Activated naive CD4-positive, alpha-beta T cell treated with anti-CD3 and anti-CD28 coated beads for 36 hours (primary cell): ENCODE measurements at regions of chr9 and their contacts with region 1.

Region 1: DNA sequence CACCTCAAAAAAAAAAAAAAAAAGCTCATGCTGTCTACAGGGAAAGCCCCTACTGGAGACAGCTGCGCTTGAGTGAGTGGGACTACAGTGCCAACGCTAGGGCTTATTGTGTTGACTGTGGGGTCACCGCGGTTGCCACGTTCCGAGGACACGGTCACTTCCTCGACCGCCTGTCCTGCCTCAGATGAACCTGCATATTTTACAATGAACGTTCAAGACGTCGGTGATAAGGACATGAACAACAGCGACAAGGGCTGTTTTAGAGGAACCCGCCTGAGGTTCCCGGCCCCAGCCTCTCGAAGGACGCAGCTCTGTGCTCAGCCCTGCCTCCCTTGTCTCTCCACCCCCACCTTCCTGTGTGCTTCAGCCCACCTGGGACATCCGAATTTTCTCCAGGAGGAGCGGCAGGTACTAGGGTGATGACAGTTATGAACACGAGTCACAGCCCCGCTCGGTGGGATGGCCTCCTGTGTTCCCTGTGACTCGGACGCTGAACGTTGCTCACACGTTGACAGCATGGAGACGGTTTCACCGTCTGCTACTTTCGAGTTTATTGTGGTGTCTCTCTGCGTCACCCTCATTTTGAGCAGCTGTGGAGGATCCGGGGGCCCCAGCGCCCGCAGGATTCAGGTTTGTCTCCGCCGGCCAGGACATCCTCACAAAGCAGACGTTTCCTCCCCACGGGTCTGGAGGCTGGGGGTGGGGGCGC is 11.3 kb upstream of the DIPK1B start:
- DNase-seq: peak; percentile 93
- H3K4me3 Mint-ChIP-seq: peak overlapping the region; percentile 69
- H3K27ac Mint-ChIP-seq: peak overlapping the region; percentile 62
- H3K4me1 Mint-ChIP-seq: peaks cover 18% of the 10 kb centered on the region
- H3K27me3 Mint-ChIP-seq: peaks cover 9% of the 10 kb centered on the region

Region 2: DNA sequence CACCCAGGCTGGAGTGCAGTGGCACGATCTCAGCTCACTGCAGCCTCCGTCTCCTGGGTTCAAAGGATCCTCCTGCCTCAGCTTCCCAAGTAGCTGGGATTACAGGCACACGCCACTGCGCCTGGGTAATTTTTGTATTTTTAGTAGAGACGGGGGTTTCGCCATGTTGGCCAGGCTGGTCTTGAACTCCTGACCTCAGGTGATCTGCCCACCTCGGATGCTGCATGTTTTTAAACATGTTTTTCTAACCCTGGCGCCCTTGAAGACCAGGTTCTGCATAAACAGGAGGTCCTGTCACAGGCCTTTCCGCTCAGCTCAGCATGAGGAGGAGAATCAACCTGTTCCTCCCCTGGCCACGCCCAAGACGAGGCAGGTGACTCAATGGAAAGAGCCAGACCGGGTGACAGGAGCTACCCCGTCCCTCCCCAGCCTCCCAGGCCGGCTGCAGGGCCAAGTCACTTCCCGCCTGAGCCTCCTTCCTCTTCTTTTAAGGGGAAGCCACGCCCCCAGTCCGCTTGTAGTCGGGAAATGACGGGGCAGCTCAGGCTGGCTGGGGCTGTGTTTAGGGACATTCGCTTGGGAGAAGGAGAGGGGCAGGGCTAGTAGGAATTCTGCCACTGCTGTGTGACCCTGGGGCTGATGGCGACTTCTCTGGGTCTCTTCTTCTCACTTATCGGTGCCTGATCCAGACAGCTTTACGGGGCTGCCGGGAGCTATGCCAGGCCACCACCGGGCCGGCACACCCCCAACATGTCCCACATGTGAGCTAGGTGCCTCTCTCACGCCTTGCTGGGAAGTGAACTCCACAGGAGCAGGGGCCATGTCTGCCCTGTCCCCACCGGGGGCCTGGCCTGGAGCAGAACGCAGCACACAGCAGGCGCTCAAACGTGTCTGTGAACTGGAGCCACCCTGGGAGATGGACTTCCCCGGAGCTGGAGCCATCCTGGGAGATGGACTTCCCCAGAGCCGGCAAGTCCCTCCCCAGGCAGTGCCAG is 161.4 kb before region 1 on chr9:
- CTCF ChIA-PET with region 1: no interaction called
- intact Hi-C with region 1: loop called (anchors 1 kb)
- DNase-seq: peak; percentile 99
- H3K4me3 Mint-ChIP-seq: peak overlapping the region; percentile 80
- H3K27ac Mint-ChIP-seq: peak overlapping the region; percentile 100
- H3K4me1 Mint-ChIP-seq: peaks cover 70% of the 10 kb centered on the region
- H3K27me3 Mint-ChIP-seq: no peaks in the 10 kb centered on the region

Region 3: DNA sequence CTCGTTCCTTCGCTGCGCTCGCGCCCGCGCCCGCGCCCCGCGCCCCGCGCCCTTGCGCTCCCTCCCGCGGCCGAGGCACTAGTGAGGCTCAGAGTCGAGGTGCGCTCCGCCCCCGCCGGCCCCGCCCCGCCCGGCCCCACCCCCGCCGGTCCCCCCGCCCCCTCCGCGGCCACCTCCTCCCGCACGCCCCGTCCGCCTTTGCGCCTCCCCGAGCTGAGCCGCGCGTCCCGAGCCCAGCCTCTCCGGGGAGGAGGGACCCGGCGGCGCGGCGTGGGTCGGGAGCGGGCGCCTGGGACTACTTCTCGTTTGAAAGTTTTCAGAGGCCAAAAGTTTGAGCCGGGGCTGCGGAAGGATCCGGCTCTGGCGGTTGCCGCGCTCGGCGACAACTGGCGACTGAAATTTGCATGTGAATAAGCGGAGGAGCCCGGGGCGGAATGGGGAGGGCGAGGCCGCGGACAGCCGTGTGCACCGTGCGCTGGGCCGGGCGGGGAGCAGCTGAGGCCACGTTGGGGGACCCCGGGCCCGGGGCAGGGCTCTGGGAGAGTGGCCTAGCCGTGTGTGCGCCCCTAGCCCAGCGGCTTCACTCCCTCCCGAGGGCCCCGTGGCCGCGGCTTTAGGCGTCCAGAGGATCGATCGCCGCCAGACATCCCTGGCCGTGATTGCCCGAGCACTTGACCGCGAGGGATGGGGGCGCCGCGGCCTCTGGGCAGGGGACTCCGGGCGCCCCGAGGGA is 155.0 kb before region 1 on chr9 and contains the start of gene NOTCH1:
- CTCF ChIA-PET with region 1: no interaction called
- intact Hi-C with region 1: loop called (anchors 1 kb)
- DNase-seq: peak; percentile 88
- H3K4me3 Mint-ChIP-seq: peak within 1 kb of the TSS; percentile 94
- H3K27ac Mint-ChIP-seq: peak within 1 kb of the TSS; percentile 95
- H3K4me1 Mint-ChIP-seq: peaks cover 44% of the 10 kb centered on the region
- H3K27me3 Mint-ChIP-seq: no peaks in the 10 kb centered on the region
- total RNA-seq, gene NOTCH1: 71.4 to 80.2 TPM

Region 4: DNA sequence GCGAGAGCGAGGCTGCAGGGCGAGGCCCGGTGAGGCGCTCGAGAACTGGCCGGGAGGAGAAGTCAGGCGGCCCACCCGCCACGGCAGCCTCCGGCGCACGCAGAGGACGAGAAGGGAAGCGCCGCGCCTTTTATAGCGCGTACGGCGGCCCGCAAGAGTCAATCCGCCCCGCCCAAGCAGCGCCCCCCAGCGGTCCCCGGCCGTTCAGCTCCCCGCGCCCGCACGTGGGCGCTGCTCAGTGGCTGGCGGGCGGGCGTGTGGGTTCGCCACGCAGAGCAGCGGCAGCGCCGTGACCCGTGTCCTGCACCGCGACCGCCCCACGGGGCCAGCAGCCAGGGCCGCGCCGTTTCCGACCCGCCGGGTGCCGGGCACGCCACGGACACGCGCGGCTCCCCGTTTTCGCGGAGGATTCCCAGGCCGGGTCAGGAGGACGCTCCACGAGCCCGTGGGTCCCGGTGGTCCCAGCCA is 27.0 kb after region 1 on chr9:
- CTCF ChIA-PET with region 1: interaction called, 9 read pairs
- intact Hi-C with region 1: loop called (anchors 1 kb)
- DNase-seq: peak; percentile 89
- H3K4me3 Mint-ChIP-seq: peak overlapping the region; percentile 92
- H3K27ac Mint-ChIP-seq: no peak overlapping the region
- H3K4me1 Mint-ChIP-seq: peaks cover 51% of the 10 kb centered on the region
- H3K27me3 Mint-ChIP-seq: no peaks in the 10 kb centered on the region

Region 5: GRCh38 chr9:136769710-136770191 is 68.6 kb after region 1 on chr9:
- CTCF ChIA-PET with region 1: no interaction called
- intact Hi-C with region 1: loop called (anchors 5 kb)
- DNase-seq: peak; percentile 70
- H3K4me3 Mint-ChIP-seq: no peak overlapping the region
- H3K27ac Mint-ChIP-seq: no peak overlapping the region
- H3K4me1 Mint-ChIP-seq: peaks cover 18% of the 10 kb centered on the region
- H3K27me3 Mint-ChIP-seq: peaks cover 19% of the 10 kb centered on the region